Mammary epithelial cell (primary cell): ENCODE measurements at regions of chr10 and their contacts with region 1.

Region 1: GRCh38 chr10:6920072-6921019 is 340.3 kb upstream of the PRKCQ start:
- DNase-seq: peak; percentile 48
- H3K4me3 ChIP-seq: no peak overlapping the region
- H3K27ac ChIP-seq: no peak overlapping the region
- H3K4me1 ChIP-seq: peaks cover 6% of the 10 kb centered on the region
- H3K27me3 ChIP-seq: peaks cover 6% of the 10 kb centered on the region
- CTCF ChIP-seq: peak; percentile 81 to 89

Region 2: GRCh38 chr10:6786579-6787031 is 133.7 kb before region 1 on chr10:
- CTCF ChIA-PET with region 1: no interaction called
- dilution Hi-C with region 1: no loop called
- in situ Hi-C with region 1: no loop called
- intact Hi-C with region 1: loop called (anchors 2 kb)
- DNase-seq: peak; percentile 48
- H3K4me3 ChIP-seq: peak overlapping the region in 1 of 3 experiments; percentile 10
- H3K27ac ChIP-seq: no peak overlapping the region
- H3K4me1 ChIP-seq: peaks cover 22% of the 10 kb centered on the region
- H3K27me3 ChIP-seq: no peaks in the 10 kb centered on the region
- CTCF ChIP-seq: peak; percentile 48 to 66

Region 3: DNA sequence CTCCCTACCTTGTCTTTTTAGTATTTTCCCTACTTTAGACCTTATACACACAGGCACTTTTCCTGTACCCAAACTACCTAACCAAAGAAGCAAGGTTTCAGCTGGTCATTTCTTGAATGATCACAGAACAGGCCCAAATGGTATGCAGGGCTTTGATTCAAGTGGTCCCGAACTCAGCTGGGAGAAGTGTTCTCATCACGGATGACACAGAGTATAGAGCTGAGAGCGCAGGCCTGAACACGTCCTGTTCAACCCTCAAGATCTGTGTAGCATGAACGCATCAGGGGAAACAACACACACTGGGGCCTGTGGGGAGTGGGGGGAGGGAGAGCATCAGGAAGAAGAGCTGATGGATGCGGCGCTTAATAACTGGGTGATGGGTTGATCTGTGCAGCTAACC is 172.3 kb after region 1 on chr10:
- CTCF ChIA-PET with region 1: interaction called, 18 read pairs
- dilution Hi-C with region 1: no loop called
- in situ Hi-C with region 1: no loop called
- intact Hi-C with region 1: no loop called
- DNase-seq: peak; percentile 29
- H3K4me3 ChIP-seq: no peak overlapping the region
- H3K27ac ChIP-seq: no peak overlapping the region
- H3K4me1 ChIP-seq: no peaks in the 10 kb centered on the region
- H3K27me3 ChIP-seq: no peaks in the 10 kb centered on the region
- CTCF ChIP-seq: no peak

Region 4: DNA sequence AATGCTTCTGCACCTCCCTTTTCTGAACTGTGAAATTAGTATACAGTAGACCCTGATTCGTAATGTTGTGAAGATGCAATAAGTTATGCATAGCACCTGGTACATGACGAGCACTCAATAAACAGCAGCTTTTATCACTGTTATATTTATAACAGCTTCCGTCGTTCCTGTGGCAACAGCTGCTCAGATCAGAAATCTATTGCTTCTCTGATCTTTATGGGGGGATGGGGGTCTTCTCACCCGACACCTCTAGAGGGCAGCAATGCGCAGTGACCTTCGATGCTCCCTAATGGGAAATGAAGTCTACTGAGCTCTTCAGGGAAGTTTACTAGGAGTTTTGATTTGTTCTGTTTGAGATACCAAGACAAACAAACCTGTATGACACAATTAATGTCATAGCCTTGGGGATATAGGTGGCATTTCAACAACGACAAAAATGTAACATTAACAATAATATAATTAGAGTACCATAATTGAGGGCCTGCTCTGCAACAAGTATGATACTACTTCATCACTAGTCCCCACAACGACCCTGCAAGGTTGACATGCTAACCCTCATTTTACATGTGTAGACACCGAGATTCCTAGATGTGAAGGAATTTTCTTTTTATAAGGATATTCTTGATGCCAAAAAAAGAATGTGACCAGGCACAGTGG is 200.9 kb after region 1 on chr10:
- CTCF ChIA-PET with region 1: no interaction called
- dilution Hi-C with region 1: no loop called
- in situ Hi-C with region 1: no loop called
- intact Hi-C with region 1: loop called (anchors 5 kb)
- DNase-seq: peak; percentile 11
- H3K4me3 ChIP-seq: no peak overlapping the region
- H3K27ac ChIP-seq: no peak overlapping the region
- H3K4me1 ChIP-seq: no peaks in the 10 kb centered on the region
- H3K27me3 ChIP-seq: no peaks in the 10 kb centered on the region
- CTCF ChIP-seq: peak; percentile 34 to 45

Region 5: DNA sequence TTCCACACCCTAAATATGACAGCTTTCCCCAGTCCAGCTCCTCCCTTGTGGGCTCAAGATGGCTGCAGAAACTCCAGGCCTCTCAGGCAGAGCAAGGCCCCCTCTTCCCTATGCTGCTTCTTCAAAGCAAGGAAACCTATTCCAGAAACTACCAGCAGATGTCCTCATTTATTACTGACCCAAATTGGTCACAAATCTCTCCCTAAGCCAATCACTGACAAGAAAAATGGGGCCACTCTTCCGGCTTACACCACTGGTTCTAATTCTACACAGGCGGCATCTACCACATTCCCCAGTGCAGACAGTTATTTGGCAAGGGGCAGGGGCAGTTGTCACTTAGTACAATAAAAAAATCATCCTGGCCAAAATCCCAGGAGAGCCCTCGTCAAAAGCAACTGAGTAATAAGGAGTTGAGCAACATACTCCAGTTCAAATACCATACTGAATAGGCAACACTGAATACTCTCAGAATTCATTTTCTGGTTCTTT is 340.1 kb after region 1 on chr10:
- CTCF ChIA-PET with region 1: no interaction called
- dilution Hi-C with region 1: no loop called
- in situ Hi-C with region 1: no loop called
- intact Hi-C with region 1: loop called (anchors 1 kb)
- DNase-seq: peak; percentile 53
- H3K4me3 ChIP-seq: no peak overlapping the region
- H3K27ac ChIP-seq: no peak overlapping the region
- H3K4me1 ChIP-seq: peaks cover 7% of the 10 kb centered on the region
- H3K27me3 ChIP-seq: no peaks in the 10 kb centered on the region
- CTCF ChIP-seq: peak; percentile 50 to 53